ENCODE measurements at regions of chr5 and their contacts with region 1.

Region 1: GRCh38 chr5:134289509-134290113 is 63.7 kb upstream of the PPP2CA start:
- DNase-seq: peak in 1 of 2 donors; percentile 25
- H3K4me3 ChIP-seq: no peak overlapping the region
- H3K27ac ChIP-seq: no peak overlapping the region
- H3K4me1 ChIP-seq: no peaks in the 10 kb centered on the region
- H3K27me3 ChIP-seq: no peaks in the 10 kb centered on the region
- CTCF ChIP-seq: peak; percentile 64 to 79

Region 2: DNA sequence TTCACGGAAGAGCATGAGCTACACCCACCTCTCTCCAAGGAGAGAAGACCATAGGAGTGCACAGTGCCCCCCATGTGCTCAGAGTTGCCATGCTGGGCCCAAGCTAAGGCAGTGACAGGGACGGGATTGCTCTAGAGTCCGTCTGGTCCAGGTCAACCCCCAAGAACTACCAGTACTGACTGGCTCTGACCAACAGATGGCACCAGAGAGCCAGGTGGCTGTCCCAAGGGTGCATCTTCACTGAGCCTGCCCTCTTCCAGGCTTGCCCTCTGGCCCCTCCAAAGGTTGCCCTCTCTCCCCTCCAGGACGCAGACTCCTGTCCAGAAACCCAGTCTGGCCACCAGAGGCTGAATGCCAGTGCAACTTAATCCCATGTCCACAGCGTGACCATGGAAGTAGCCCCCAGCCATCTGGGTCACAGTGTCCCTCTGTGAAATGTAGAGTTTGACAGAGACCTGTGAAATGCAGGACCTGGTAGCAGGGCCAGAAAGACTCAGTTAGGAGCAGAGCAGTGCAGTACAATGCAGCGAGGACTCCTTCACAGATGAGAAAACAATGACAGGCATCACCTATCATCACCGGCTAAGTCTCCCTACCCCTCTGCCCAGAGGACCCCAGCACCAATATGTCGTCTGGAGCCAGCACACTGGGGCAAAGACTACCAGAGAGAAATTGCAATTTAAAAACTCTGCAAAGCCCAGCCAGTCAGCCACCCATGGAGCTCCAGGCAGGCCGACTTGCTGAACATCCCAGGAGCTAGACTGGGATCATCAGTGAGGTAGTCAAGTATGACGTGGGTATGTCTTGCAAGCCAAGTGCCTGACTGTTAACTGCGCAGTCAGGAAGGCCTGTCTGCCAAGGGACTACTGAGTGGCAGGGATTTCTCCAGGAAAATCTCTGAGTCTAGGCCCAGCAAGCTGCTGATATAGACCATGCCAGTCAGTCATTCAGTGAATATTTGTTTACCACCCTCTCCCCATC is 105.2 kb before region 1 on chr5:
- intact Hi-C with region 1: loop called (anchors 2 kb)
- DNase-seq: peak; percentile 61 to 81
- H3K4me3 ChIP-seq: no peak overlapping the region
- H3K27ac ChIP-seq: no peak overlapping the region
- H3K4me1 ChIP-seq: peaks cover 0 to 3% (median 0%) of the 10 kb centered on the region in 4 donors
- H3K27me3 ChIP-seq: no peaks in the 10 kb centered on the region
- CTCF ChIP-seq: peak; percentile 84 to 95

Measured in tibial artery (tissue), 4 donors.